ENCODE measurements at regions of chr2 and their contacts with region 1.

Region 1: GRCh38 chr2:54503192-54503591 is 47.1 kb downstream of the SPTBN1 start:
- DNase-seq: peak; percentile 79
- ATAC-seq: peak; percentile 96
- H3K4me3 Mint-ChIP-seq: no peak overlapping the region
- H3K27ac Mint-ChIP-seq: peak overlapping the region; percentile 10; the same call in 1 of the 2 replicates
- H3K4me1 Mint-ChIP-seq: peaks cover 53% of the 10 kb centered on the region
- H3K27me3 Mint-ChIP-seq: no peaks in the 10 kb centered on the region
- CTCF ChIP-seq: peak; percentile 70

Region 2: DNA sequence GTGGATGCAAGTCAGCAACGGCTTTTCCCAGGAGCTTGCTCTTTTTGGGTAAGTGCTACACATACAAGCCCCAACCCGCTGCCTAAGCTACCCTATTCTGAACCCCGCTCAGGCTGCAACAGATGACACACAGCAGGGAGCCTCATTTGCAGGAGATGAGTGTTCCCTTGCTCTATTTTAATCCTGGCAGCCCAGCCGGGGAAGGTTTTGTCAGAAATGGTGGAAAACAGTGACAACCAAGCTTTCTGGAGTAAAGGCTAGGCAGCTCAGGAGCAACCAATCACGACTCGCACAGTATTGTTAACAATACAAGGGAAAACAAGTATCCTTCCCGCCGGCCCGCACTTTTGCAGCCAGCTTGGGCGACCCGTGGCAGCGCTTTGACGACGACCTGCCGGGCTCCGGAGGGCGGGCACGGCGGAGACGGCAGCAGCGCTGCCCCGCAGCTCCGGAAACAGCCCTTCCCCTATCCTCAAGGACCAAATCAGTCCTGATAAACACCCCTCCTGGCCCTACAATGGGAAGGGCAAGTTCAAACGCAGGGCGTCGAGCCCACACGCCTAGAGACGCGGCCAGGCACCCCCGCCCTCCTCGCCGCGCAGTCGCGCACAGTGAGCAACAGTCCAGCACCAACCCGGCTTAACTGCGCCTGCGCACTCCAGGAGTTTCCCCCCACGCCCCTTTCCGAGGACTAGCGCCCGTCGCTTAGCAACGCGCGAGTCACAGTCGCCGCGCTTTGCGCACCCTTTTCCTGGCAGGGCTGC is 172.8 kb before region 1 on chr2:
- CTCF ChIA-PET with region 1: interaction called, 12 read pairs
- POLR2A ChIA-PET with region 1: no interaction called
- DNase-seq: peak; percentile 95
- ATAC-seq: peak; percentile 95
- H3K4me3 Mint-ChIP-seq: peak overlapping the region; percentile 69
- H3K27ac Mint-ChIP-seq: no peak overlapping the region
- H3K4me1 Mint-ChIP-seq: peaks cover 10% of the 10 kb centered on the region
- H3K27me3 Mint-ChIP-seq: peaks cover 38% of the 10 kb centered on the region
- CTCF ChIP-seq: no peak